ENCODE measurements at regions of chr16 and their contacts with region 1.

Region 1: DNA sequence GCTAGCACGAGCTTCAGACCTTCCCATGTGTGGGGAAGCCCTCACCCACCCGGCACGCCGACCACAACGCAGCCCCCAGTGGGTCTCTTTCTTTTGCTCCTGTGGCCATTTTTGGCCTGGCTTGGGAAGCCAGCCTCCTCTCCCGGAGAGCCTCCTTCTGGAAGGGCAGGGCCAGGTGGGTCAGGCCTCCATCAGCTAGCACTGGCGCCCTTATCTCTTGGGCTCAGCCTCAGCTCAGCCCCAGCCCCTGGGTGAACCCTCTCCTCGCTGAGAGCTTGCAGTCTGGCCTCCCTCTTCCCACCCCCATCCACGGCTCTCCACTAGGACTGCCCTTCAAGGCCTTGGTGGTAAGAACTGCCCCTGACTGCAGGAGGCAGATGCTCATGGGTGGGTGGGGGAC is 14.7 kb upstream of the JPH3 start:
- DNase-seq: no peak
- ATAC-seq: no peak
- H3K4me3 ChIP-seq: no peak overlapping the region
- H3K27ac ChIP-seq: no peak overlapping the region
- H3K4me1 ChIP-seq: peaks cover 0 to 2% of the 10 kb centered on the region in 2 experiments; a peak in 2 of 4 replicates
- H3K27me3 ChIP-seq: peaks cover 31% of the 10 kb centered on the region
- CTCF ChIP-seq: no peak
- POLR2A ChIP-seq: no peak
- RAD21 ChIP-seq: no peak

Region 2: DNA sequence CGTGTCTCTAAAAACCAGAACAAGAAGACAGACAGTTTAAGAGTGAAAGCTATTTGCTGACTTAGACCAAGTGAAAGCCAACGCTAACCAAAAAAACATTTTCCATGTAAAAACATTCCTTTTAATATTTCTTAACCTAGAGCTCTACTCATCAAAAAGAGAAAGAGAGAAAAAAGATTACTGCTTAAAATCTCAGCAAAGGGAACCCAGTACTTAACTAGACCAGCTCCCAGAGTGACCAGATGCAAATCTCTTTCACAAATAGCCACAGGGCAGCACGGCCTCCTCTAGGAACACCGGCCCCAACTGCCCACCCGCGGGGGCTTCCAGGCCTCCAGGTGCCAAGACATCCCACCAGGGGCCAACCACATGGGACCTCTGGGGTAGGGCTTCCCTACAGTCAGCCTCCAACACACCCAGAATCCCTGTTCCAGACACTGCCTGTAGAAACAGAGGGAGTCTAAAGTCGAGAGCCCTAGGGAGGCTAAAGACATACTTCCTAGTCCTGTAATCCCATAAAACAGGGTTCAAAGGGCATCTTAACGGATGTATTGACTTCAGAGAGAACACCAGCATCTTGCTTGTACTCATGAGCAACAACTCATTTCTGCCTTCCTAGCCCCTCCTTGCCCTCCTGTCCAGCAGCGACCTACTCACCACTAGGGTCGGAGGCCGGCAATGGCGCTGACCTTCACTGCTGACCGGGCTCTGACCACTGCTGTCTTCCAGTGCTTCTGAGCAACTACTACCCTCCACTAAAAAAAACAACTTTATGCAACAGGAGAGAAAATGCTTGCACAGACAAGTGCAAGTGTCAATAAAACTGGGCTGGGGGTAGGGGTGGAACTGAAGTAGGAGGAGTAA is 116.1 kb before region 1 on chr16:
- CTCF ChIA-PET with region 1: no interaction called
- POLR2A ChIA-PET with region 1: no interaction called
- RAD21 ChIA-PET with region 1: no interaction called
- intact Hi-C with region 1: no loop called
- DNase-seq: no peak
- ATAC-seq: no peak
- H3K4me3 ChIP-seq: no peak overlapping the region
- H3K27ac ChIP-seq: no peak overlapping the region
- H3K4me1 ChIP-seq: peaks cover 0 to 2% of the 10 kb centered on the region in 2 experiments; a peak in 2 of 4 replicates
- H3K27me3 ChIP-seq: no peaks in the 10 kb centered on the region
- CTCF ChIP-seq: no peak
- POLR2A ChIP-seq: no peak
- RAD21 ChIP-seq: no peak

Region 3: DNA sequence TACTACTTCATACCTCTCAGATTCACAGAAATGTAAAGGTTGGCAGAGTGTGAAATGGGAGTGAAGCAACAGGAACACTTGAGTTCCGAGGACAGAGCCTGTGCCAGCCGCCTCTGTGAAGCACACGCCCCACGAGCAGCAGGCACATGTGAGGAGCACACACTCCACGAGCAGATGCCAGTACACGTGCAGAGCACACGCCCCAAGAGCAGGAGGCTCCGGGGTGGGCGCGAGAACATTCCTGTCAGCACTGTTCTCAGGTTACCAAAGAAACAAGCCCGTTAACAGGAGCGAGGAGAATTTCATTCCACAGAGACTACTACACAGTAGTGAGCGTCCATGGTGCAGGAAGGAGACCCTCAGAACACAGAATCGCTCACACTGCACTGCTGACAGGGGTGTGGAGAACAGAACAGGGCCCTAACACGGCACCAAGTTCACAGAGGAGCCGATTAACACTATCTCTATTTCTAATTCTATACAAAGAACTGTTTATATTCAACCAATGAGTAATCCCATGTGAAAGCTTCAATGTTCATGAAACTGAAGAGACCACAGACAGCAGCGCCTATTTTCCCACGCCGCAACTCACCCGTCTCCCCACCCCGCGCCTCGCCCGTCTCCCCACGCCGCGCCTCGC is 138.1 kb after region 1 on chr16:
- CTCF ChIA-PET with region 1: no interaction called
- POLR2A ChIA-PET with region 1: no interaction called
- RAD21 ChIA-PET with region 1: no interaction called
- intact Hi-C with region 1: no loop called
- DNase-seq: no peak
- ATAC-seq: peak; percentile 32; the same call in 1 of the 2 replicates
- H3K4me3 ChIP-seq: no peak overlapping the region
- H3K27ac ChIP-seq: no peak overlapping the region
- H3K4me1 ChIP-seq: no peaks in the 10 kb centered on the region
- H3K27me3 ChIP-seq: no peaks in the 10 kb centered on the region
- CTCF ChIP-seq: no peak
- POLR2A ChIP-seq: no peak
- RAD21 ChIP-seq: no peak

Region 4: GRCh38 chr16:87765776-87766484 is 178.3 kb after region 1 on chr16 and contains the start of gene KLHDC4:
- CTCF ChIA-PET with region 1: interaction called, 6 read pairs
- POLR2A ChIA-PET with region 1: no interaction called
- RAD21 ChIA-PET with region 1: no interaction called
- intact Hi-C with region 1: loop called (anchors 2 kb)
- DNase-seq: peak; percentile 81
- ATAC-seq: peak; percentile 84
- H3K4me3 ChIP-seq: peak within 1 kb of the TSS; percentile 80 to 100
- H3K27ac ChIP-seq: peak within 1 kb of the TSS; percentile 68
- H3K4me1 ChIP-seq: peaks cover 13 to 29% of the 10 kb centered on the region in 2 experiments
- H3K27me3 ChIP-seq: no peaks in the 10 kb centered on the region
- CTCF ChIP-seq: no peak
- POLR2A ChIP-seq: peak; percentile 71
- RAD21 ChIP-seq: no peak
- total RNA-seq, gene KLHDC4: 107 TPM